Activated naive CD4-positive, alpha-beta T cell treated with anti-CD3 and anti-CD28 coated beads for 36 hours (primary cell): ENCODE measurements at regions of chr1 and their contacts with region 1.

Region 1: GRCh38 chr1:169711469-169712281 is at the start of gene SELL:
- DNase-seq: peak; percentile 91
- H3K4me3 Mint-ChIP-seq: peak within 1 kb of the TSS; percentile 80
- H3K27ac Mint-ChIP-seq: peak within 1 kb of the TSS; percentile 94
- H3K4me1 Mint-ChIP-seq: peaks cover 12% of the 10 kb centered on the region
- H3K27me3 Mint-ChIP-seq: peaks cover 5% of the 10 kb centered on the region
- total RNA-seq, gene SELL: 362 to 365 TPM

Region 2: GRCh38 chr1:169106095-169106920 is 605.4 kb before region 1 on chr1 and contains the start of gene ATP1B1:
- CTCF ChIA-PET with region 1: no interaction called
- intact Hi-C with region 1: loop called (anchors 5 kb)
- DNase-seq: peak; percentile 78
- H3K4me3 Mint-ChIP-seq: peak within 1 kb of the TSS; percentile 77
- H3K27ac Mint-ChIP-seq: peak within 1 kb of the TSS; percentile 16
- H3K4me1 Mint-ChIP-seq: peaks cover 43% of the 10 kb centered on the region
- H3K27me3 Mint-ChIP-seq: peaks cover 15% of the 10 kb centered on the region
- total RNA-seq, gene ATP1B1: 5.6 to 6.2 TPM

Region 3: DNA sequence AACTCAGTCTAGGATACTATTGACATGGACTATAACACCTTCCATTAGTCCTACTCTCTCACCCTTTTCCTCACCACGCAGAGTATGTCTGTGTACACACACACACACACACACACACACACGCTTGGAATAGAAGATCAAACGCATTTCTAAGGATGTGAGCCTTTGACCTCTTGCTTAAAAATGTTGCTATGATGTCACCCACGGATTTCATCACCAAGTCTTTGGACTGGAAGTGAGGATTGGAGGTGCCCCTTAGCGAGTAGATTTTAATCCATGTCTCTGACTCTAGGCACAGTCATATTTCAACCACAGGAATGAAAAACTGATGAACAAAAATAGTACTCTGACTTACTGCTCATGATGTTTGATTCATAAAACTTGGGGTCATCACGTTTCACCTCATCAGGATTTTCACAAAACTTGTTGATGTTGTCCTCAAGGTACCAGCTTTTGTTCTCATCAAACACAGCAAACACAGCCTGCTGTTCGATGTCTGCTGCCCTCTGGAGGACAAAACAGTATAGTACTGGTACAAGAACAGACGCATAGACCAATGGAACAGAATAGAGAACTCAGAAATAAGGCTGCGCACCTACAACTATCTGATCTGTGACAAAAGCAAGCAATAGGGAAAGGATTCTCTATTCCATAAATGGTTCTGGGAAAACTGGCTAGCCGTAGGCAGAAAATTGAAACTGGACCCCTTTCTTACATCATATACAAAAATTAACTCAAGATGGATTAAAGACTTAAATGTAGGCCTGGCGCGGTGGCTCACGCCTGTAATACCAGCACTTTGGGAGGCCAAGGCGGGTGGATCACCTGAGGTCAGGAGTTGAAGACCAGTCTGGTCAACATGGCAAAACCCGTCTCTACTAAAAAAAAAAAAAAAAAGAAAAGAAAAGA is 165.3 kb before region 1 on chr1:
- CTCF ChIA-PET with region 1: interaction called, 11 read pairs
- intact Hi-C with region 1: loop called (anchors 1 kb)
- DNase-seq: peak; percentile 48
- H3K4me3 Mint-ChIP-seq: no peak overlapping the region
- H3K27ac Mint-ChIP-seq: no peak overlapping the region
- H3K4me1 Mint-ChIP-seq: no peaks in the 10 kb centered on the region
- H3K27me3 Mint-ChIP-seq: no peaks in the 10 kb centered on the region

Region 4: GRCh38 chr1:169601093-169601881 is 110.4 kb before region 1 on chr1:
- CTCF ChIA-PET with region 1: interaction called, 262 read pairs
- intact Hi-C with region 1: loop called (anchors 1 kb)
- DNase-seq: peak; percentile 34
- H3K4me3 Mint-ChIP-seq: no peak overlapping the region
- H3K27ac Mint-ChIP-seq: peak overlapping the region; percentile 84
- H3K4me1 Mint-ChIP-seq: peaks cover 61% of the 10 kb centered on the region
- H3K27me3 Mint-ChIP-seq: no peaks in the 10 kb centered on the region

Region 5: DNA sequence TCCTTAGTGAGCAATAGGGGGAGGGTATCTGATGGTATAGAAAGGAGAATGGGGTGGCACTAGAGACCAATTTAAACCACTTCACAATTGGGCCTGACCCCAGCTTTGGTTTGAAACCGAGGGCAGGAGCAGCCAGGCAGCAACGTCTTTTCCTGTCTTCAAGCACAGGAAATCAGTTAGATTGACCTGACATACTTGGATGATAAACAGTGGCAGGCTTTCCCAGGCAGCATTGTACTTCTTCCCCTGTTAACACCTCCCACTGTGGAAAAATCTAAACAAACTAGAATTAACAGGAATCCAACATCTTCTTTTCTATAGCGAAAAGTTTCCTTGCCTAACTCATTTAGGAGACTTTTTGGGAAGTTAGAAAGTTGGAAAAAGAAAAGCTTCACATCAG is 40.8 kb before region 1 on chr1:
- CTCF ChIA-PET with region 1: interaction called, 3 read pairs
- intact Hi-C with region 1: loop called (anchors 2 kb)
- DNase-seq: no peak
- H3K4me3 Mint-ChIP-seq: no peak overlapping the region
- H3K27ac Mint-ChIP-seq: peak overlapping the region; percentile 62
- H3K4me1 Mint-ChIP-seq: peaks cover 60% of the 10 kb centered on the region
- H3K27me3 Mint-ChIP-seq: no peaks in the 10 kb centered on the region

Region 6: DNA sequence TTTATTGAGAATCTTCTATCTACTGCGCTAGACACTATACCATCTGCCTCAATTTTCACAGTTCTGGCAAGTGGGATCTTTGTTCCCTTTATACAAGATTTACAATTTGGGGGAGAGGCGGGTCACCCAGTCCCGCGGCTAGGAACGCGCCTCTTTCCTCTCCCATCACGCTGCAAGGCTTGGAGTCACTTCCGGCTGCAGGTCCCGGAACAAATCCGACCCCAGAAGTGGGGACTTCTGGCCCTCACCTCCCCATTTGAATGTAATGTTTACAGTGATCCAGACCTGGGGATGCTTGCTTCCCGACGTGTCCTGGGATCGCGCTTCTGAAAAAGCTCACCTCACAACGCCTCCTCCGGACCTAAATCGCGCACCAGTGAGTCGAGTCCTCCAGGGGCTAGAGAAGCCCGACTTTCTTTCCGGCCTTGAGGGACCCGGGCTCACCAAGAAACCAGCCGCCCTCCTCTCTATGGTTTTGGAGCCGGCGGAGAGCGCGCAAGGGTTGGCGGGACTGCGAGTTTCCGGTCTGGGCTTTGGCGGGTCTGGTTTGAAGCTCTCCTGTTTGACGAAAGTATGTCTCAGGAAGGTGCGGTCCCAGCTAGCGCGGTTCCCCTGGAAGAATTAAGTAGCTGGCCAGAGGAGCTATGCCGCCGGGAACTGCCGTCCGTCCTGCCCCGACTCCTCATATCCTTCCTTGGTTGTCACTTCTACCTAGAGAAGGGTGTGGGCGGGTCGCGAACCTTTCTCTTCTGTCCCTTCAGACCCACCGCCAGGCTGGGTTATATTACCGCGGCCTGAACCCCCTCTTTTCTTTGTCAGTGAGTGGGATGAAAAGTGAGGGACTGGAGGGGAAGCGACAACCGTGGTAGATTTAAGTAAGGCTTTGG is 83.1 kb after region 1 on chr1 and contains the start of gene METTL18:
- CTCF ChIA-PET with region 1: interaction called, 8 read pairs
- intact Hi-C with region 1: loop called (anchors 1 kb)
- DNase-seq: peak; percentile 97
- H3K4me3 Mint-ChIP-seq: peak within 1 kb of the TSS; percentile 99
- H3K27ac Mint-ChIP-seq: peak within 1 kb of the TSS; percentile 99
- H3K4me1 Mint-ChIP-seq: peaks cover 48% of the 10 kb centered on the region
- H3K27me3 Mint-ChIP-seq: no peaks in the 10 kb centered on the region
- total RNA-seq, gene METTL18: 10.6 to 11.1 TPM

Region 7: GRCh38 chr1:170074250-170075157 is 362.8 kb after region 1 on chr1 and contains the start of gene KIFAP3:
- CTCF ChIA-PET with region 1: no interaction called
- intact Hi-C with region 1: loop called (anchors 10 kb)
- DNase-seq: peak; percentile 98
- H3K4me3 Mint-ChIP-seq: peak within 1 kb of the TSS; percentile 92
- H3K27ac Mint-ChIP-seq: peak within 1 kb of the TSS; percentile 74
- H3K4me1 Mint-ChIP-seq: peaks cover 48% of the 10 kb centered on the region
- H3K27me3 Mint-ChIP-seq: no peaks in the 10 kb centered on the region
- total RNA-seq, gene KIFAP3: 8.7 to 8.8 TPM